Right cardiac atrium (tissue), 5 donors: ENCODE measurements at regions of chr11 and their contacts with region 1.

Region 1: DNA sequence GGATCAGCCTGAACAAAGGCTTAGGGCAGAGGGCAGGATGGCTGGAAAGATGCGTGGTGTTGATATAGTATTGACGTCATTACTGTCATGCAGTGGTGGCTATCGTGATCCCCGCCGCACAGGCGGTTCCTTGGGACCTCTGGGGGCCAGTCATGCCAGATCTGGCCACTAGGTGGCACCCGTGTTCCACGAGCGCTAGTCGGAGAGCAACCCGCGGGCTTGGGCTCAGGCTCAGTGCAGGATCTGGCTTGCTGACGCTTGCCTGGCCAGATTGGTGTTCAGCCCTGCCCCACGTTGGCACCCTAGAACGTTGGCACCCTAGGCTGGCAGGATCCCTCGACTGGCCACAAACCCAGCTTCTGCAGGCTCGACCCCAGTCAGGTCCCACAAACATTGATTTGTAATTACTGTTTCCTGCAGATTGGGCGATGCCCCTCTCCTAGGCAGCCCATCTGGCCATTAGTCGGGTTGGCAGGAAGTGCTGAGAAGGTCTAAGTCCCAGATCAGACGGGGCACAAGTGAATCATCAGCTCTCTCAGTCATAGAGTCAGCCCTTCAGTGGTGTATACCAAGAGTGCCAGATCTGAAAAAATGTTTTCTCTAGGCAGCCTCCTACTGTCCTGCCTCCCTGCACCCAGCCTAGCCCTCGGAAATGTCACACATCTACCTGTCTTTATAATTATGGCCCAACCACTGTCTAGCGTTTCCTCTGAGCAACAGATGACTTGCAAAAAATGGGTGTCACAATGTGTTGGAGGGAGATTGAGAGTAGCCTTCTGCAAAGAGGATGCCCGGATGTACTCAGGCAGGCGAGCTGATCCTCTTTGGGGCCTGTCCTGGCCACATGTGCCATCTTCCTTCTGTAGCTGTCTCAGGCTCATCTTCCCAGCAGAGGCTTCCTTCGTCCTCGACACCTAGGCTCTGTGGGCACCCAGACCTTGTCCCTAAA is 315.3 kb downstream of the TMEM135 start:
- DNase-seq: peak; percentile 88 to 94 (median 94)
- ATAC-seq: peak; percentile 90 to 95
- H3K4me3 ChIP-seq: no peak overlapping the region
- H3K27ac ChIP-seq: no peak overlapping the region
- H3K4me1 ChIP-seq: peaks cover 10% of the 10 kb centered on the region
- H3K27me3 ChIP-seq: no peaks in the 10 kb centered on the region

Region 2: GRCh38 chr11:87391496-87391895 is 38.5 kb after region 1 on chr11:
- intact Hi-C with region 1: no loop called
- DNase-seq: no peak
- ATAC-seq: peak; percentile 47 to 88
- H3K4me3 ChIP-seq: no peak overlapping the region
- H3K27ac ChIP-seq: no peak overlapping the region
- H3K4me1 ChIP-seq: no peaks in the 10 kb centered on the region
- H3K27me3 ChIP-seq: no peaks in the 10 kb centered on the region

Region 3: DNA sequence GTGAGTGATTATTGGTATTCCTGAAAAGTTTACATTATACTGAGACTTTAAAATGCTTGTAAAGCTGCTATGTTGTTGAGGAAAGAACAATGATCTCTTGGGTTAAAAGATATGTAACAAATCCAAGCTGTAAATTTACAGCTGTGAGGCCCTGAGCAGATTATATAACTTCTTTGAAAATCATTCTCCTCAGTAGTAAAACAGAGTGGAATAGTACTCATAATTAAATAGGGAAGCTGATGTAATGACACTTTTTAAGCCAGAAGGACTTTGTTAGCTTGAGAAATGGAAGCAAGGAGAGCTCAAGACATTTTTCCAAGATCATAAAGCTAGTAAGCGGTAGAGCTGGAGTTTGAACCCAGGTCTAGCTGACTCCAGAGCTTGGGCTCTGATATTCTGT is 48.6 kb after region 1 on chr11:
- intact Hi-C with region 1: no loop called
- DNase-seq: no peak
- ATAC-seq: no peak
- H3K4me3 ChIP-seq: no peak overlapping the region
- H3K27ac ChIP-seq: no peak overlapping the region
- H3K4me1 ChIP-seq: no peaks in the 10 kb centered on the region
- H3K27me3 ChIP-seq: no peaks in the 10 kb centered on the region

Region 4: DNA sequence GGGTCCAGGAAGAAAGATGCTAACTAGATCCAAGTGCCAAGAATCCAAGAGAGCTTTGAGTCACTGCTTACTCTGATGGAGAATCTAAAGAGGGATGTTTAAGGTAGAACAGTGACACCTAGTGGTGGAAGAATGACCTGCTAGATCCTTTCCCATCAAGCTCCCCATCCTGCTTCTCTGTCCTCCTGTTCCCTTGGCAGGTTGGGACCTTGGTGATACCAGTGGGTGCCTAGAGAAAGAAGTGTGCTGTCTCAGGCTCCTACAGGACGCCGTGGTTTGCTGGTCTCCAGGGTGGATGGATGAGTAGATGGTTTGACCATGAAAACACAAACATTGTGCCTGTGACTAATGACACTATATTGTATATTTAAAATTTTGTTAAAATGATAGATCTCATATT is 68.4 kb after region 1 on chr11:
- intact Hi-C with region 1: loop called (anchors 2 to 5 kb)
- DNase-seq: no peak
- ATAC-seq: peak; percentile 86 to 88
- H3K4me3 ChIP-seq: no peak overlapping the region
- H3K27ac ChIP-seq: no peak overlapping the region
- H3K4me1 ChIP-seq: no peaks in the 10 kb centered on the region
- H3K27me3 ChIP-seq: no peaks in the 10 kb centered on the region

Region 5: DNA sequence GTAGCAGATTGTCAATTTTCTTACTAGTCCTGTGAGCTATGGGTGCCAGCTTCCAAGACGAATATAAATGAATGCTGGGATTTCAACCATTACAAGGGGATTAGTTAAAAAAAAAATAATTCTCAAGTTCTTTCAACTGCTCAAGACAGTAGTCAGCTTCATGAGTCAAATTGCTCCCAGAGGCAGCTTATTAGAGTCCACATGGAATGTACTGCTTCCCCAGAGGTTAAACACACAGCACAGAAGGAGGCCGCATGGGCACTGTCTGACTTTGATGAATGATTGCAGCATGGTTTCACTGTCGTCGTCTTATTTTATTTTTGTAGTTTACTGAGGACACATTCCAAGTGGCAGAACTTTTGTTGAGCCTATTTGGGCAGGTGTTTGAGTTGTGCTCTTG is 247.9 kb after region 1 on chr11:
- intact Hi-C with region 1: no loop called
- DNase-seq: no peak
- ATAC-seq: no peak
- H3K4me3 ChIP-seq: no peak overlapping the region
- H3K27ac ChIP-seq: no peak overlapping the region
- H3K4me1 ChIP-seq: no peaks in the 10 kb centered on the region
- H3K27me3 ChIP-seq: no peaks in the 10 kb centered on the region